Calu3 (cell line): ENCODE measurements at regions of chrX and their contacts with region 1.

Region 1: GRCh38 chrX:124406294-124407014 is 60.1 kb downstream of the SH2D1A start:
- DNase-seq: peak; percentile 74
- H3K4me3 Mint-ChIP-seq: no peak overlapping the region
- H3K27ac Mint-ChIP-seq: no peak overlapping the region
- H3K4me1 Mint-ChIP-seq: peaks cover 13% of the 10 kb centered on the region
- H3K27me3 Mint-ChIP-seq: no peaks in the 10 kb centered on the region
- CTCF ChIP-seq: peak; percentile 33

Region 2: DNA sequence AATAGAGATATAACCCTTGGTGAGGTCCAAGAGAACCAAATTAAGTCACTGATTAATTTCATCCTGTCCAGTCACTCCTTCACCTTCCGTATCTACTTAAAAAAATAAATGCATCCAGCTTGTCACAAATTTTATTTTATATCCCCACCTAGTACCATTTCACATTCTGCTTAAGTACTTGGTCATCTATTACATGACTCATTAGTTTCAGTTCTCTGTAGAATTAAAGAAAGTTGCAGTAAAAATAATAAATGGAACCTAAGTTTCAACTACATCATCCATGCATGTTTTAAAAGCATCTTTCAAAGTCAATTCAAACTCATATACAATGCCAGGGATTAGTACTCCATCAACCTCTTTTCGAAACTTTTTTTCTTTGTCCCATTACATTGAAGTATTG is 70.1 kb after region 1 on chrX:
- CTCF ChIA-PET with region 1: no interaction called
- intact Hi-C with region 1: no loop called
- DNase-seq: no peak
- H3K4me3 Mint-ChIP-seq: no peak overlapping the region
- H3K27ac Mint-ChIP-seq: no peak overlapping the region
- H3K4me1 Mint-ChIP-seq: no peaks in the 10 kb centered on the region
- H3K27me3 Mint-ChIP-seq: peaks cover 19% of the 10 kb centered on the region
- CTCF ChIP-seq: no peak

Region 3: DNA sequence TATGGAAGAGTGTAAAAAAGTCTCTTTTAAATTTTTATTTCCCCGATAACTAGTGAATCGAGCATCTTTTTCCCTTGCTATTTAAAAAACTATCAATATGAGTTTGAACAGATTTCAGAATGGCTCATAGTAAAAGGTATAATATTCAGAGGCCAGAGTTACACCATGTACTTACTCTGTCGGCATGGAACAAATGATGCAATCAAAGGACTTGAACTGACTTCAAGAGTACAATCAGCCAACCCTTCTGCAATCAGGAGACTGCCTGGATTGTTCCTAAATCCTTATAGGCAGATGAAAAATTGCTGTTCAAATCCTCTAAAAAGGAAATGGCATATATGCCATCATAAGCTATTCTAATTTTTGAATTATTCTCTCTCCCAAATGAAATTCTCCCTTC is 213.3 kb after region 1 on chrX:
- CTCF ChIA-PET with region 1: no interaction called
- intact Hi-C with region 1: loop called (anchors 5 kb)
- DNase-seq: no peak
- H3K4me3 Mint-ChIP-seq: no peak overlapping the region
- H3K27ac Mint-ChIP-seq: no peak overlapping the region
- H3K4me1 Mint-ChIP-seq: no peaks in the 10 kb centered on the region
- H3K27me3 Mint-ChIP-seq: no peaks in the 10 kb centered on the region
- CTCF ChIP-seq: no peak

Region 4: GRCh38 chrX:124719060-124719459 is 312.6 kb after region 1 on chrX:
- CTCF ChIA-PET with region 1: no interaction called
- intact Hi-C with region 1: loop called (anchors 10 kb)
- DNase-seq: no peak
- H3K4me3 Mint-ChIP-seq: no peak overlapping the region
- H3K27ac Mint-ChIP-seq: no peak overlapping the region
- H3K4me1 Mint-ChIP-seq: no peaks in the 10 kb centered on the region
- H3K27me3 Mint-ChIP-seq: no peaks in the 10 kb centered on the region
- CTCF ChIP-seq: no peak

Region 5: GRCh38 chrX:125132285-125132684 is 725.8 kb after region 1 on chrX:
- CTCF ChIA-PET with region 1: no interaction called
- intact Hi-C with region 1: loop called (anchors 5 kb)
- DNase-seq: no peak
- H3K4me3 Mint-ChIP-seq: no peak overlapping the region
- H3K27ac Mint-ChIP-seq: no peak overlapping the region
- H3K4me1 Mint-ChIP-seq: no peaks in the 10 kb centered on the region
- H3K27me3 Mint-ChIP-seq: no peaks in the 10 kb centered on the region
- CTCF ChIP-seq: no peak